Prostate gland (tissue), 2 donors: ENCODE measurements at regions of chr18 and their contacts with region 1.

Region 1: GRCh38 chr18:11947214-11948191 is 33.8 kb upstream of the IMPA2 start:
- DNase-seq: peak; percentile 83
- H3K4me3 ChIP-seq: peak overlapping the region; percentile 25 to 28
- H3K27ac ChIP-seq: peak overlapping the region; percentile 72 to 80
- H3K4me1 ChIP-seq: no peaks in the 10 kb centered on the region
- H3K27me3 ChIP-seq: no peaks in the 10 kb centered on the region
- CTCF ChIP-seq: peak in 1 of 4 experiments; percentile 9
- POLR2A ChIP-seq: peak; percentile 70

Region 2: DNA sequence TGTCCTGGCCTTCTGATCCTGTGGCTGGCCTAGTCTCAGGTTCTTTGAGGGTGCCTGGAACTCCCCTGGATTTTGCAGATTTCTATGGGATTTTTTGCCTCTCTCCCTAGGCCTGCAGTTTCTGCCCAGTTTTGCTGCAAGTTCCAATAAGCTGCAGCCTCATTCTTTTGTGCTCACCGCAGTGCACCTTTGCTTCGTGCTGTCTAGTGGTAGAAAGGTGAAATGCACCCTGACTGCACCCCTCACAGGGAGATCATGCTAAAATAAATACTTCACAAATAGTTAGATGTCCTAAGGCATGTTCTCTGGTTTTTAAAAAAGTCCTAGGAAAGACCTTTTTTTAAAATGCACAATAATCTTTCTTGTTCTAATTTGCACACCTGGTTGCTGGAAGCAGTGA is 185.9 kb before region 1 on chr18:
- intact Hi-C with region 1: no loop called
- DNase-seq: no peak
- H3K4me3 ChIP-seq: no peak overlapping the region
- H3K27ac ChIP-seq: no peak overlapping the region
- H3K4me1 ChIP-seq: no peaks in the 10 kb centered on the region
- H3K27me3 ChIP-seq: no peaks in the 10 kb centered on the region
- CTCF ChIP-seq: no peak
- POLR2A ChIP-seq: no peak

Region 3: GRCh38 chr18:11980555-11981382 is 33.3 kb after region 1 on chr18:
- intact Hi-C with region 1: loop called (anchors 2 kb)
- DNase-seq: peak; percentile 99
- H3K4me3 ChIP-seq: peak overlapping the region; percentile 71 to 86
- H3K27ac ChIP-seq: peak overlapping the region; percentile 90 to 95
- H3K4me1 ChIP-seq: peaks cover 4% of the 10 kb centered on the region
- H3K27me3 ChIP-seq: no peaks in the 10 kb centered on the region
- CTCF ChIP-seq: peak in 1 of 4 experiments; percentile 20
- POLR2A ChIP-seq: peak; percentile 81